SK-N-SH (cell line): ENCODE measurements at regions of chr9 and their contacts with region 1.

Region 1: DNA sequence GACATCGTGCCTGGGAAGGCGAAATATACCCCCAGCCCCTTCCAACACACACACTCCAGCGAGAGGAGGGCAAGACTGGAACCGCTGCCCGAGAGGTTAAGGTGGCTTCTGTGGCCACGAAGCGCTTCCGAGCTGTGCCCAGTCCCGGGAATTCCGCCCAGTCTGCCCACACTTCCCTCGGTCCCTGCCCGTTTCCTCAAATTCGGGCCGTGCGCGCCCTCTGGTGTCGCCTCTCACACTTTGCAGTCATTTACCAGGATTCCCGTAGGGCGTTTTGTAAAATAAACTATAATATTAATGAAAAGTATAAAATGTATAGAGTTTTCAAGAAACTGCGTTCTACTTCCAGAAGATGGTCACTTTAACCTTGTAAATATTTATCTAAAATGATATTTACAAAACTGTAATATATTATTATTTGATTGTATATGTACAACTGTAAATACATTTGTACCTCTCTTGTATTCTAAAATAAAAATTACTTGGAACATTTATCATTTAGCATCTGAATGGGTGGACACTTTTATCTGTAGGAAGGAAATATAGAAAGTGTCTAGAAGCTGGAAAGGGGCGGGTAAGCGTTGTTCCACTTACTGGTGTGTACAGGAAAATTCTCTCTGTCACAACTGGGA is 11.0 kb upstream of the EXOSC2 start:
- DNase-seq: peak; percentile 89
- H3K4me3 ChIP-seq: peak overlapping the region; percentile 47 to 58
- H3K27ac ChIP-seq: no peak overlapping the region
- H3K4me1 ChIP-seq: peaks cover 0 to 11% of the 10 kb centered on the region in 2 experiments; a peak in 1 of 4 replicates
- H3K27me3 ChIP-seq: no peaks in the 10 kb centered on the region
- CTCF ChIP-seq: peak; percentile 81
- EP300 ChIP-seq: no peak
- RAD21 ChIP-seq: peak; percentile 93

Region 2: DNA sequence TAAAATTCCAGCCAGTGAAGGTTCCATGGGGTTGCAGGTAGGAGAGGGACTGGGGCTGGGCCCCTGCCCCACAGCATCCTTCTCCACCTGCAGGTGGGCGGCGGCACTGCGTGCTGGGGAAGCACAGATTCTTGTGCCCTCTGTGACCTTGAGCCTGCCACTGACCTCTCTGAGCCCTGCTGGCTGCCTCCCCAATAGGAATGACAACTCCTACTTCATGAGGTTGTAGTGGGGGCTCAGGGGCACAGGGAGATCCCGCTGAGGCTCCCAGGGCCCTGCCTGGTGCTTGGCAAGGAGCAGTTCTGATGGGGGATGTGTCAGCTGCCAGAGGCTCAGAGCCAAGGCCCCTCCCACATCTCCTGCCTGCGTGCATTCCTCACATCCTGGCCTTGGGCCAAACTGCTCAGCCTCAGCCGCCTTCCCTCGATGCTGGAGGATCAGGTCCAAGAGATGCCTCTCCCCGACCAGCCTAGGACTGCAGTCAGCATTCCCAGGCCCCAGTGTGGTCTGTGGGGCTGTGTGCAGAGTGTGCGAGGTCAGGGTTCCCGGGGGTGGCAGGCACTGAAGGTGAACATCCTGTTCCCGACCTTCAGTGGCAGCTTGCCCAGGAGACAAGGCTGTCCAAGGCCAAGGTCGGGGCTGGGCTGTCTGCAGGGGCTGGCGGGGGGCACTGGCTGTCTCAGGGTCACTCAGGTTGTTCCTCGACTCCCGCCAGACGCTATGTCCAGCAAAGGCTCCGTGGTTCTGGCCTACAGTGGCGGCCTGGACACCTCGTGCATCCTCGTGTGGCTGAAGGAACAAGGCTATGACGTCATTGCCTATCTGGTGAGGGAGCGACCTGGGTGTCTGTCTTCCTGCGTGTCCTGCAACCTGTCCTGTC is 230.9 kb before region 1 on chr9:
- CTCF ChIA-PET with region 1: interaction called, 520 read pairs
- POLR2A ChIA-PET with region 1: no interaction called
- DNase-seq: peak; percentile 81
- H3K4me3 ChIP-seq: no peak overlapping the region
- H3K27ac ChIP-seq: peak overlapping the region in 1 of 2 experiments; percentile 96; a peak in 2 of 4 replicates
- H3K4me1 ChIP-seq: peaks cover 19 to 75% of the 10 kb centered on the region in 2 experiments; a peak in 3 of 4 replicates
- H3K27me3 ChIP-seq: no peaks in the 10 kb centered on the region
- CTCF ChIP-seq: peak; percentile 63
- EP300 ChIP-seq: no peak
- RAD21 ChIP-seq: no peak; the same call in 1 of the 2 replicates

Region 3: DNA sequence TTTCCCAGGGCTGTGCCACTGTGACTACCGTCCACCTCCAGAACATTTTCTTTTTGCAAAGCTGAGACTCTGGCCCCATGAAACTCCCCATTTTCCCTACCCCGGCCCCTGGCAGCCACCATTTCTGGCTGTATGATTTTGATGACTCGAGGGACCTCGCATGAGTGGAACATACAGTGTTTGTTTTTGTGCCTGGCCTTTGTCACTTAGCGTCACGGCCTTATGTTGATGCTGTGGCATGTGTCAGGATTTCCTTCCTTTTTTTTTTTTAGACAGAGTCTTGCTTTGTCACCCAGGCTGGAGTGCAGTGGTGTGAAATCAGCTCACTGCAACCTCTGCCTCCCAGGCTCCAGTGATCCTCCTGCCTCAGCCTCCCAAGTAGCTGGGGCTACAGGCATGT is 195.1 kb before region 1 on chr9:
- CTCF ChIA-PET with region 1: interaction called, 520 read pairs
- POLR2A ChIA-PET with region 1: no interaction called
- DNase-seq: no peak
- H3K4me3 ChIP-seq: no peak overlapping the region
- H3K27ac ChIP-seq: no peak overlapping the region
- H3K4me1 ChIP-seq: peaks cover 0 to 14% of the 10 kb centered on the region in 2 experiments; a peak in 1 of 4 replicates
- H3K27me3 ChIP-seq: no peaks in the 10 kb centered on the region
- CTCF ChIP-seq: no peak
- EP300 ChIP-seq: no peak
- RAD21 ChIP-seq: no peak

Region 4: GRCh38 chr9:130663258-130663976 is 19.2 kb before region 1 on chr9:
- CTCF ChIA-PET with region 1: interaction called, 13 read pairs
- POLR2A ChIA-PET with region 1: no interaction called
- DNase-seq: peak; percentile 68
- H3K4me3 ChIP-seq: no peak overlapping the region
- H3K27ac ChIP-seq: no peak overlapping the region
- H3K4me1 ChIP-seq: peaks cover 0 to 3% of the 10 kb centered on the region in 2 experiments; a peak in 1 of 4 replicates
- H3K27me3 ChIP-seq: peaks cover 87% of the 10 kb centered on the region
- CTCF ChIP-seq: no peak
- EP300 ChIP-seq: no peak
- RAD21 ChIP-seq: no peak